ENCODE measurements at regions of chr20 and their contacts with region 1.

Region 1: GRCh38 chr20:4082406-4083097 is 67.2 kb upstream of the RNF24 start:
- DNase-seq: peak in 7 of 9 donors; percentile 8 to 58 (median 30)
- ATAC-seq: peak; percentile 68
- H3K4me3 ChIP-seq: peak overlapping the region; percentile 36
- H3K4me3 Mint-ChIP-seq: peak overlapping the region in 8 of 10 donors; percentile 1 to 81 (median 42)
- H3K27ac ChIP-seq: no peak overlapping the region
- H3K27ac Mint-ChIP-seq: peak overlapping the region; percentile 20 to 98 (median 78)
- H3K4me1 ChIP-seq: peaks cover 18 to 29% of the 10 kb centered on the region in 2 donors
- H3K4me1 Mint-ChIP-seq: peaks cover 25 to 60% (median 43%) of the 10 kb centered on the region in 7 donors
- H3K27me3 ChIP-seq: no peaks in the 10 kb centered on the region
- H3K27me3 Mint-ChIP-seq: peaks cover 0 to 8% (median 0%) of the 10 kb centered on the region in 5 donors

Region 2: DNA sequence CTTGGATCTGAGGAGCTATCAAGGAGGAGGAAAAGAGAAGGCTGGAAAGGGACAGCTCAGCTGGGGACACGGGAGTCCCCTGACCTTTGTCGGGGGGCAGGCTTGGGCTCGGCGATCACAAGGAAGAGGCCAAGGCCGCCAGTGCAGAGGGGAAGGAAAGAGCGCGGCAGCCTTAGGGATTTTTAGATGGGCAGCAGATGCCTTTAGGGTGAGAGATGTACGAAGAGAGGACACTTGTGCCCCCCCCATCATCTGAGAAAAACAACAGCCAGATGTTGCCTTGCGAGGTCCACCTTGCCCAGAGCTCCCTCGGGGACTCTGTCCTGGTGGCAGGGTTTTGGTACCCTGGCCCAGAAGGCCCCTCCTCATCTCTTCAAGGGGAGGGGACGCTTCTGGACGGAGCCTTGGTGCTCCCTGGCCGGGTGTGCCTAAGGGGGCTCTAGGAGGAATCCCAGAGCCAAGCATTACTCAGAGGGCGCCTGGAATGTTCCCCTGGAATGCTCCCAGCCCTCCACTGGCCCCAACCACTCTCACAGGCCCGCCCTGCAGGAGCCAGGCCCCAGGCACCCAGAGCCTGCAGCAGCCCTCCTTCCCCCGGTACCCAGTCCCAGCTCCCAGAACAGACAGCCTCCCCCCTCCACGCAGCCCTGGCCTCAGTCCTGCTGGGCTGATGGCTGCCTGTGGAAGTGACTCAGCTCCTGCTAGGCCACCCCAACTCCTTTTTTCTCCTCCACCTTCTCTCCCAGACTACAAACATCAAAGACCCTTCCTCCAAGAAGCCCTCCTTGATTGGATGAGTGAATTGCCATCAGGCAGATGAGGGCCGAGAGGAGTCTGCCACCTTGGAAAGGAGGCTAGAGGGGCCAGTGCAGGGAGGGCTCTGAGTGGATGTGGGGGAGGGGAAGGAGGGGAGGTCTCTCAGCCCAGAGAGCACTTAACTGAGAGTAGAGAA is 402.5 kb before region 1 on chr20:
- CTCF ChIA-PET with region 1: no interaction called
- POLR2A ChIA-PET with region 1: no interaction called
- intact Hi-C with region 1: loop called (anchors 1 to 2 kb)
- DNase-seq: no peak
- ATAC-seq: no peak
- H3K4me3 ChIP-seq: no peak overlapping the region
- H3K4me3 Mint-ChIP-seq: no peak overlapping the region
- H3K27ac ChIP-seq: no peak overlapping the region
- H3K27ac Mint-ChIP-seq: no peak overlapping the region
- H3K4me1 ChIP-seq: no peaks in the 10 kb centered on the region
- H3K4me1 Mint-ChIP-seq: peaks cover 0 to 9% (median 4%) of the 10 kb centered on the region in 7 donors
- H3K27me3 ChIP-seq: no peaks in the 10 kb centered on the region
- H3K27me3 Mint-ChIP-seq: peaks cover 47 to 71% (median 60%) of the 10 kb centered on the region in 5 donors

Region 3: DNA sequence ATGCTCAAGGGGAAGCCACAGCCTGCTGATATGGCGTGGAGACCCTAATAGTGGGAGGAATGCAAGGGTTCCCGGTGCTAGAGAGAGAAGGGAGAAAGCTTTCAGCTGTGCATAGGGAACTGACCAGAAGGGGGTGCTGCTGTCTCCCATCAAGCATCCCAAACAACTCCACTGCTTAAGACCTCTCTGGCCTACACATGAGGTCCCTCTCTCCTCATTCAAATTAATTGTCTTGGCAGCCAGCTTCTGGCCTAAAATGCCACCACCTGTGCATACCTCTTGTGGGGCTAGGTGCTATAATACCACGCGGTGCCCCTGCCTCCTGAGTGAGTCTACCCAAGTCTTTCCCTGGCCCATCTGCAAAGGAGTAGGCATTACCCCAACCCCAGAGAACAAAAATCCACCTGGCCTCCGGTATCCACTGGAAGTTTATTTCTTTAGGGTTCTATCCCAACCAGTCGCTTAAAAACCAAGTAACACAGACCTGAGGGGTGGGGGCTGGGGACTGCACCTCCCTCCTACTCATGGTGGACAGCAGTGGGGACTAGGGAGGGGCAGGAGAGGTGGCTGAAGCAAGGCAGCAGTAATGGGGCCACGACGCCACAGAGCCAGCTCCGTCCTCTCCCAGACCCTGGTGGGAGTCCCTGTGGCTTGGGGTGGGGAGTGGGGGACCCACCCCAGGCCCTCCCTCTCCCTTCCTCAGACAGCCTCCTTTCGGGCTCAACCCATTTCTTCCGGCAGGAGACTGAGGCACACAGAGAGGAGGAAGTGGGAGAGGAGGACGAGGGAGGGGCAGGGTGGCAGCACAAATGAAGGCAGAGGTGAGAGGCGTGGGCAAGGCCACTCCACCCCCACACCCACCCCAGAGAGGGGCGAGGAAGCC is 329.2 kb before region 1 on chr20:
- CTCF ChIA-PET with region 1: interaction called, 3 read pairs
- POLR2A ChIA-PET with region 1: no interaction called
- intact Hi-C with region 1: loop called (anchors 1 kb)
- DNase-seq: peak in 8 of 9 donors; percentile 33 to 64 (median 56)
- ATAC-seq: peak; percentile 82
- H3K4me3 ChIP-seq: no peak overlapping the region
- H3K4me3 Mint-ChIP-seq: peak overlapping the region in 5 of 10 donors; percentile 32 to 83 (median 41)
- H3K27ac ChIP-seq: no peak overlapping the region
- H3K27ac Mint-ChIP-seq: peak overlapping the region in 5 of 9 donors; percentile 15 to 86 (median 47)
- H3K4me1 ChIP-seq: peaks cover 0 to 5% of the 10 kb centered on the region in 2 donors
- H3K4me1 Mint-ChIP-seq: peaks cover 0 to 15% (median 4%) of the 10 kb centered on the region in 7 donors
- H3K27me3 ChIP-seq: no peaks in the 10 kb centered on the region
- H3K27me3 Mint-ChIP-seq: no peaks in the 10 kb centered on the region

Region 4: GRCh38 chr20:3888622-3889488 is 193.7 kb before region 1 on chr20 and contains the start of gene PANK2:
- CTCF ChIA-PET with region 1: interaction called, 3 read pairs
- POLR2A ChIA-PET with region 1: interaction called, 10 read pairs
- intact Hi-C with region 1: loop called (anchors 1 kb)
- DNase-seq: peak; percentile 85 to 96 (median 94)
- ATAC-seq: peak; percentile 98
- H3K4me3 ChIP-seq: peak within 1 kb of the TSS; percentile 82
- H3K4me3 Mint-ChIP-seq: peak within 1 kb of the TSS; percentile 96 to 100 (median 98)
- H3K27ac ChIP-seq: peak within 1 kb of the TSS; percentile 91
- H3K27ac Mint-ChIP-seq: peak within 1 kb of the TSS; percentile 87 to 99 (median 97)
- H3K4me1 ChIP-seq: peaks cover 10 to 25% of the 10 kb centered on the region in 2 donors
- H3K4me1 Mint-ChIP-seq: peaks cover 42 to 64% (median 55%) of the 10 kb centered on the region in 7 donors
- H3K27me3 ChIP-seq: no peaks in the 10 kb centered on the region
- H3K27me3 Mint-ChIP-seq: no peaks in the 10 kb centered on the region
- total RNA-seq, gene PANK2: 42.4 to 69.7 (median 59.1) TPM

Region 5: DNA sequence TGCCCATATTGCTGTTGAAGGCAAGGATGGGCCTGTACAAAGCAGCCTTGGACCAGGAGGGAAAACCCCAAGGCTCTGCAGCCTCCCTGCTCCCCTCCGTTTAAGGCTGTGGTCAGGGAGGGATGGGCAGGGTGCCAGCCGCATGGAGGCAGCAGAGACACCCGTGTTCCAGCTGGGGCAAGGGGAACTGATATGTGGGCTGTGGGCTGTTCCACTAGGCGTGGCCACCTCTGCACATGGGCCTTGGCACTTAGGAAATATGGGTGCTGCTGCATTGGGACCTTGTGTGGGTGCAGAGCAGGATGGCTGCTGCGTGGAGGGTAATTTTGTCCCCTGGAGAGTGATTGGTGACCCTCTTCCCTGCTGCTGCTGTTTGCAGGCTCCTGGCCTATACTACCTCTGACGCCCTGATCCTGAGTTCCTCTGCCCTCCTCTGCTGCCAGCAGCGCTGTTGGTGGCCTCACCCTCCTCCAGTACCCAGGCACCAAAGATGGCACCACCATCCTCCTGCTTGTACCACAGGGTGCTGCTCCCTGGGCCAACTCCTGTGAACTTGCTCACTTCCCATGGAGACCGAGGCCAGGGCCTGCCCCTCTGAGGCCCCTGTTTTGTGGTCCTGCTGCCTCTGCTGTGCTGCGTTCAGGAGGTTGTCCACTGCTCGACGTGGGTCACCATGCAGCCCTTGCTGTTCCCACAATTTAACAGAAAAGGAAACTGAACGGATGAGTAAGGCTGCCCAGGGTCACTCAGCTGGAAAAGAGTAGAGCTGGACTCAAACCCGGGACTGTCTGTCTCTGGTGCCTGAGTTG is 158.0 kb before region 1 on chr20:
- CTCF ChIA-PET with region 1: no interaction called
- POLR2A ChIA-PET with region 1: no interaction called
- intact Hi-C with region 1: no loop called
- DNase-seq: no peak
- ATAC-seq: peak; percentile 63
- H3K4me3 ChIP-seq: no peak overlapping the region
- H3K4me3 Mint-ChIP-seq: no peak overlapping the region
- H3K27ac ChIP-seq: no peak overlapping the region
- H3K27ac Mint-ChIP-seq: peak overlapping the region in 8 of 9 donors; percentile 56 to 86 (median 81)
- H3K4me1 ChIP-seq: no peaks in the 10 kb centered on the region
- H3K4me1 Mint-ChIP-seq: peaks cover 24 to 59% (median 32%) of the 10 kb centered on the region in 7 donors
- H3K27me3 ChIP-seq: no peaks in the 10 kb centered on the region
- H3K27me3 Mint-ChIP-seq: no peaks in the 10 kb centered on the region

Region 6: GRCh38 chr20:4014031-4014474 is 68.5 kb before region 1 on chr20:
- CTCF ChIA-PET with region 1: interaction called, 34 read pairs
- POLR2A ChIA-PET with region 1: interaction called, 29 read pairs
- intact Hi-C with region 1: loop called (anchors 1 kb)
- DNase-seq: peak in 7 of 9 donors; percentile 18 to 54 (median 35)
- ATAC-seq: no peak
- H3K4me3 ChIP-seq: no peak overlapping the region
- H3K4me3 Mint-ChIP-seq: peak overlapping the region; percentile 72 to 95 (median 89)
- H3K27ac ChIP-seq: no peak overlapping the region
- H3K27ac Mint-ChIP-seq: peak overlapping the region; percentile 28 to 97 (median 78)
- H3K4me1 ChIP-seq: peaks cover 8 to 9% of the 10 kb centered on the region in 2 donors
- H3K4me1 Mint-ChIP-seq: peaks cover 26 to 52% (median 35%) of the 10 kb centered on the region in 7 donors
- H3K27me3 ChIP-seq: no peaks in the 10 kb centered on the region
- H3K27me3 Mint-ChIP-seq: no peaks in the 10 kb centered on the region

Region 7: DNA sequence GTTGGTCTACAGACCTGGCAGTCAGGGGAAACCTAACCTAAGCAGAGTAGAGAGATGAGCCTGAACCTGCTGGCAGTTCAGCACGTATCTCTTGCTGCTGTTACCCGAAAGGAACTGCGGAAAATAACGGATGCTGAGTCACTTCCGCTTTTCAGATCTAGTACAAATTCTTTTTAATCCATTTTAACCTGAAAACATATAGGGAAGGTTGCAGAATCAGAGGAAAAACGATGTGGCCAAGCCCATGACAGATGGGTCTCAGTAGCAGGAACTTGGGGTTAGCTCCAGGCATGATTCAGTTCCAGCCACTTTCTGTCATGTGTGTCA is 287.2 kb after region 1 on chr20:
- CTCF ChIA-PET with region 1: no interaction called
- POLR2A ChIA-PET with region 1: no interaction called
- intact Hi-C with region 1: no loop called
- DNase-seq: peak in 2 of 9 donors; percentile 8 to 41
- ATAC-seq: peak; percentile 55
- H3K4me3 ChIP-seq: no peak overlapping the region
- H3K4me3 Mint-ChIP-seq: peak overlapping the region in 8 of 10 donors; percentile 4 to 74 (median 25)
- H3K27ac ChIP-seq: no peak overlapping the region
- H3K27ac Mint-ChIP-seq: peak overlapping the region in 6 of 9 donors; percentile 3 to 92 (median 44)
- H3K4me1 ChIP-seq: peaks cover 0 to 9% of the 10 kb centered on the region in 2 donors
- H3K4me1 Mint-ChIP-seq: peaks cover 11 to 50% (median 13%) of the 10 kb centered on the region in 7 donors
- H3K27me3 ChIP-seq: no peaks in the 10 kb centered on the region
- H3K27me3 Mint-ChIP-seq: peaks cover 0 to 5% (median 0%) of the 10 kb centered on the region in 5 donors